ENCODE measurements at regions of chr11 and their contacts with region 1.

Region 1: DNA sequence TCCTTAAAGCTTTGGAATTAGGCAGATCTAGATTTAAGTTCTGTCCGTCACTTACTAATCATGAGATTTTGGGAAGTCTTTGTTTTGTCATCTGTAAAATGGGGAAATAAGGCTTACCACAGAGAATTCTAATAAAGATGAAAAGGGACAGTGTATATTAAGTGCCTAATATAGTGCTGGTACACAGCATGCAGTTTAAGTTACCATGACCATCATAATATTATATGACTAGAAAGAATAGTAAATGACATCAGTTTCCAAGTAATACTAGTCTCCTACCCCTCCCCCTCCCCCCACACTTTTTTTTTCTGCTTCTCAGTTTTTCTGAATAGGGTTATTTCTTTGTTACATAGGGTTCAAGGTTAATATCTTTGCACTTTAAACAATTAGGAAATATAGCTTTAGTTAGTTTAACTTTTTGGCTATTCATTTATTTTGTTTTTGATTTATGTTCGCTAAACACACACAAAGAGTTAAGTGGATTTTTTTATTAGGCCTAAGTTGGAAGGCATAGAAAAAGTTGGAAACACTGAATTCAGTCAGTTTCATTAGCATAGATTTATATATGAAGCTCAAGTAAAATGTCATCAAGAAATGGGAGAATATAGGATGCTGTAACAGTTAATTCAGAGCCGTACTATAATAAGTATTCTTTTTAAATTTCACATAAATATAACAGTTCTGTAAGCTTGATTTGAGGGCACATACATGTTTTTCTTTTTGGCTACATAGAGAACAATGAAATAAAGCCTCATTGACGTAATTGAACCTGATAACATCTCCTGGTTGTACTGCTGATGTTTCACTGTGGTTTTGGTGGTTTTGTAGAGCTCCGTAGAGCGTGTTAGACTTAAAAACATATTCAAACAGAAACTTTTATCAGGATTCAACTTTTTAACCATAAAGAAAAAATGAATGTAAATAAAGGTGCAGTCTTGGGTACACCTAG is 121.2 kb downstream of the PDE3B start:
- DNase-seq: no peak
- H3K4me3 ChIP-seq: no peak overlapping the region
- H3K27ac ChIP-seq: peak overlapping the region in 2 of 4 donors; percentile 1 to 37
- H3K4me1 ChIP-seq: peaks cover 0 to 22% (median 0%) of the 10 kb centered on the region in 4 donors
- H3K27me3 ChIP-seq: no peaks in the 10 kb centered on the region
- CTCF ChIP-seq: no peak
- EP300 ChIP-seq: no peak
- POLR2A ChIP-seq: no peak

Region 2: GRCh38 chr11:14554959-14555358 is 209.9 kb before region 1 on chr11:
- in situ Hi-C with region 1: loop called in 1 of 4 experiments (anchors 25 kb)
- intact Hi-C with region 1: no loop called
- DNase-seq: no peak
- H3K4me3 ChIP-seq: no peak overlapping the region
- H3K27ac ChIP-seq: peak overlapping the region; percentile 43 to 80 (median 62)
- H3K4me1 ChIP-seq: peaks cover 3 to 15% (median 9%) of the 10 kb centered on the region in 4 donors
- H3K27me3 ChIP-seq: no peaks in the 10 kb centered on the region
- CTCF ChIP-seq: no peak
- EP300 ChIP-seq: peak; percentile 77
- POLR2A ChIP-seq: no peak

Region 3: GRCh38 chr11:14789879-14790484 is 25.1 kb after region 1 on chr11:
- in situ Hi-C with region 1: no loop called
- intact Hi-C with region 1: no loop called
- DNase-seq: no peak
- H3K4me3 ChIP-seq: no peak overlapping the region
- H3K27ac ChIP-seq: no peak overlapping the region
- H3K4me1 ChIP-seq: no peaks in the 10 kb centered on the region
- H3K27me3 ChIP-seq: no peaks in the 10 kb centered on the region
- CTCF ChIP-seq: peak in 4 of 5 experiments; percentile 37 to 46 (median 40)
- EP300 ChIP-seq: no peak
- POLR2A ChIP-seq: no peak

Measured in transverse colon (tissue), 4 donors.